ENCODE measurements at regions of chr1 and their contacts with region 1.

Region 1: GRCh38 chr1:54810100-54810942 is 9.2 kb upstream of the TTC22 start:
- DNase-seq: peak; percentile 33 to 73
- H3K4me3 ChIP-seq: no peak overlapping the region
- H3K27ac ChIP-seq: no peak overlapping the region
- H3K4me1 ChIP-seq: peaks cover 26% of the 10 kb centered on the region
- H3K27me3 ChIP-seq: no peaks in the 10 kb centered on the region
- CTCF ChIP-seq: peak; percentile 83

Region 2: GRCh38 chr1:53860967-53861411 is 949.3 kb before region 1 on chr1:
- CTCF ChIA-PET with region 1: no interaction called
- POLR2A ChIA-PET with region 1: no interaction called
- intact Hi-C with region 1: loop called (anchors 5 kb)
- DNase-seq: peak; percentile 47 to 50
- H3K4me3 ChIP-seq: no peak overlapping the region
- H3K27ac ChIP-seq: no peak overlapping the region
- H3K4me1 ChIP-seq: no peaks in the 10 kb centered on the region
- H3K27me3 ChIP-seq: no peaks in the 10 kb centered on the region
- CTCF ChIP-seq: peak; percentile 80

Region 3: GRCh38 chr1:53878492-53879105 is 931.7 kb before region 1 on chr1:
- CTCF ChIA-PET with region 1: no interaction called
- POLR2A ChIA-PET with region 1: no interaction called
- intact Hi-C with region 1: loop called (anchors 5 kb)
- DNase-seq: peak in 1 of 2 experiments; percentile 63
- H3K4me3 ChIP-seq: no peak overlapping the region
- H3K27ac ChIP-seq: no peak overlapping the region
- H3K4me1 ChIP-seq: no peaks in the 10 kb centered on the region
- H3K27me3 ChIP-seq: no peaks in the 10 kb centered on the region
- CTCF ChIP-seq: peak; percentile 83

Region 4: GRCh38 chr1:54070171-54070837 is 740.0 kb before region 1 on chr1:
- CTCF ChIA-PET with region 1: no interaction called
- POLR2A ChIA-PET with region 1: no interaction called
- intact Hi-C with region 1: loop called (anchors 1 kb)
- DNase-seq: peak in 1 of 2 experiments; percentile 55
- H3K4me3 ChIP-seq: no peak overlapping the region
- H3K27ac ChIP-seq: no peak overlapping the region
- H3K4me1 ChIP-seq: no peaks in the 10 kb centered on the region
- H3K27me3 ChIP-seq: no peaks in the 10 kb centered on the region
- CTCF ChIP-seq: peak; percentile 77

Region 5: DNA sequence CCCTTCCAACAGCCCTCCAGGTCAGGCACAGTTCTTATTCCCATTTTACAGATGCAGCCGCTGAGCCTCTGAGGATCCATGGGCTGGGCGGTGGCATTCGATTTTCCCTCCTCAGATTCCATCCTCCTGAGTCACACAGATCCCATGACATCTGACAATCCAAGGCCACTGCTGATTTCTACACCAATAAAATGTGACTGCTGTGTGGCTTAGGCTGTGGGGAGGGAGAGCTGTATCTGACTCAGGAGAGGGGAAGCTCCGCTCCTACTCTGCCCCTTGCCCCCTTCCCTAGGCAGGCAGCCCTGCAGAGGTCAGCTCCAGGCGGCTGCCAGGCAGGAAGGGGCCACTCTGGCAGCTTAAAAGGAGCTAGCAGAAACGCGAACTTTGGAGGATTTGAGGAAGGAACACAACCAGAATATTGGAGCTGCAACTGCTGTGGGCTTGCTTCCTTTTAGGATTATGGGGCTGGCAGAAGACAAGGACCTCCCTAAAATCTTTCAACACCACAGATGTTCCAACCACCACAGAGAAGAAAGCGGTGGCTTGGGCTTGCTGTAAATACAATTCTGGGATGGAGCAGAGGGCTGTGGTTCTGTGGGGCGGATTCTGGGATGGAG is 560.4 kb before region 1 on chr1:
- CTCF ChIA-PET with region 1: no interaction called
- POLR2A ChIA-PET with region 1: no interaction called
- intact Hi-C with region 1: no loop called
- DNase-seq: peak; percentile 49 to 67
- H3K4me3 ChIP-seq: no peak overlapping the region
- H3K27ac ChIP-seq: peak overlapping the region; percentile 48; the same call in 1 of the 2 replicates
- H3K4me1 ChIP-seq: peaks cover 31% of the 10 kb centered on the region
- H3K27me3 ChIP-seq: no peaks in the 10 kb centered on the region
- CTCF ChIP-seq: no peak

Region 6: DNA sequence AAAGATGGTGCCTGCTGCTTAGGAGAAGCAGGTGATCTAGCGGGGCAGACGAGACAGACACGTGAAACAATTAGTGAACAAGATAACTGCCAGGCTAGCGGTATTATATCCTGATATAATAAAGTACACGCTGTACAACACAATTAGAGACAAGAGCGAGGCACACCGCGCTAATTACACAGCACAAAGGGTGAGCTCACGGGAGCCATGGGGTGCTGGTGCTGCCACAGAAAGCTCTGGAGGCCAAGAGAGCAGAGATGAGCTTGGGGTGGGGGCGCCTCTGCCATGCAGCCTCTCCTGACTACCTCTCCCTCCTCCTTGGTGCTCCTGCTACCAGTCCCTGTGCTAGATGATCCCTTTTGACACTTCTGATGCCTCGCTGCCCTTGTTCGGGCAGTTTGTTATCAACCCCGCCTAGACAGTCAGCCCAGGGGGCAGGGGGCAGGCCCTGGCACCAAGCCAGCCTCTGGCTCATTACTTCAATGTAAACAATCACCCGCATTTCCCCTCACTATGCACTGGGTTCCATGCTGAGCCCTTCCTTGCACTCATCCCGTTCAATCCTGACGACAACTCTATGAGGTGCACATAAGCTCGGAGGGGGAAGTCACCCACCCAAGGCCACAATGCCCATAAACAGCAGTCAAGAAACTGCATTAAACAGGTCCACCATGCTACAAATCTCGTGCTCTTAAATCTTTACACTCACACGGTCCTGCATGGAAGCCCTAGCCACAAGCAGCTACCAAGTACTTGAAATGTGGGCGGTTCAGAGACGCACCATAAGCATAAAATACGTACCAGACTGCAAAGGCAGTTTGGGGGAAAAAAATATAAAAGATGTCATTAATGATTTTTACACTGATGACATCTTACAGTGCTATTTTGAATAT is 507.1 kb before region 1 on chr1:
- CTCF ChIA-PET with region 1: no interaction called
- POLR2A ChIA-PET with region 1: no interaction called
- intact Hi-C with region 1: no loop called
- DNase-seq: no peak
- H3K4me3 ChIP-seq: no peak overlapping the region
- H3K27ac ChIP-seq: no peak overlapping the region
- H3K4me1 ChIP-seq: no peaks in the 10 kb centered on the region
- H3K27me3 ChIP-seq: no peaks in the 10 kb centered on the region
- CTCF ChIP-seq: no peak

Region 7: DNA sequence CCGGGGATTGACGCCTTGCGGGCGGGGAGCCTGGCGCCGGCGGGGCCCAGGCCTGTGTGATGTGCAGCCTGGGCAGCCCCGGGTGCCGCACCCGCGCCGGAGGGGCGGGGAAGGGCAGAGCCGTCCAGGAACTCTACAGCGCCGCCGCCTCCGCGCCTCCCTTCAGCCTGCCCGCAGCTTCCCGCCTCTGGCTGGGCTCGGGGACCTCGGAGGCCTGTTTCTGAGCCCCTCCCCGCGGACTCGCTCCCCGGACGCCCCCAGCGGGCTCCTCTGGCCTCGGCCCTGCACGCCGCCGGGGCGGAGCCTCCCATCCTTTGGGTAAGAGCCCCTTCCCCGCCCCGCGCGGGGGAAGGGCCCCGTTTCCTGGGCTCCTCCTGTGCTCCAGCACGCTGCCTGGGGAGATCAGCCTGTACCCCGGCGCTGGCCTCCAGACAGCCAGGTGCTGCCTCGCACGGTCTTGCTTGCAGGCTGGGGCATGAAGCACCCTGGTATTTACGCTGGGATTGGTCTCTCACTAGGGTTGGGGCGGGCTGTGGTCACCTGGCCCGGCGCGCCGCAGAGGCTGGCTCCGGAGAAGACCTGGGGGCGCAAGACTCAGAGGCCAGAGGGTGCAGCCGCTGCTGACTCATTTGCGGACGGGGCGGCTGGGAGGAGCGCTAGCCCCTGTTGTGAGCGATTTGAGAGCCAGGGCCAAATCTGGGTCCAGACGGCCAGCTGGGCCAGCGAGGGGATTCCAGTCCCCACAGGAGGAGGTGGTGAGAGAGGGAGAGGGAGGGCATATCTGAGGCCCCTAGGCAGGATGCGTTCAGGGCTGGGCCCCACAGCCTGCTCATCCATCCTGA is 268.0 kb before region 1 on chr1:
- CTCF ChIA-PET with region 1: no interaction called
- POLR2A ChIA-PET with region 1: no interaction called
- intact Hi-C with region 1: loop called (anchors 5 kb)
- DNase-seq: peak; percentile 77 to 94
- H3K4me3 ChIP-seq: peak overlapping the region; percentile 62; the same call in 1 of the 2 replicates
- H3K27ac ChIP-seq: no peak overlapping the region
- H3K4me1 ChIP-seq: peaks cover 6% of the 10 kb centered on the region; the same call in 1 of the 2 replicates
- H3K27me3 ChIP-seq: no peaks in the 10 kb centered on the region
- CTCF ChIP-seq: no peak; the same call in 1 of the 2 replicates

Region 8: DNA sequence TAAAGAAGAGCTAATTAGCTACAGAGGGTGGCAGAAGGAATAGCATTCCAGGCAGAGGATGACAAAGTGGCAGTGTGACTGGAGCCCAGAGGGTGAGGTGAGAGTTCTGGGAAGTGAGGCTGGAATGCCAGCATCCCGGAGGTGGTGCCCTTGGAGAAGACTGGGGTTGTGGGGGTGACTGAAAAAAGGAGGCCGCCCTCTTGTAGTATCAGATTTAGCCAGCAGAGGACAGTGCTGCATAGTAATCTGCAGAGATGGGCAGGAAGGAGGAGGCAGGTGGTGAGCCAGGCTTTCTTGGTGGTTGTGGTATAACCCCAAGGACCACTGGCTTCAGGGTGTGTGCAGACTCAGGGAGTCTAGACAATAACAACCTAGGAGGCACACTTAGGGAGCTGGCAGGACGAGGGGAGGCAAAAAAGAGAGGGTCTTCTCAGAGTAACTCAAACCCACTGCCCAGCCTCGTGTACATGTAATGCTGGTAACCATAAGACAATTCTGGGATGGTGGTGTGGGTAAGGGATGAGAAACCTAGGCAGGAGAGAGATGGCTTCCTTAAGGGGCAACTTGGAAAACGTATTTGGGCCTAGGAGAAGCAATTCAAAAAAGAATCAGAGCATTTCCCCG is 138.2 kb before region 1 on chr1:
- CTCF ChIA-PET with region 1: no interaction called
- POLR2A ChIA-PET with region 1: no interaction called
- intact Hi-C with region 1: loop called (anchors 1 kb)
- DNase-seq: peak; percentile 52 to 73
- H3K4me3 ChIP-seq: no peak overlapping the region
- H3K27ac ChIP-seq: no peak overlapping the region
- H3K4me1 ChIP-seq: no peaks in the 10 kb centered on the region
- H3K27me3 ChIP-seq: no peaks in the 10 kb centered on the region
- CTCF ChIP-seq: peak; percentile 94